Right cardiac atrium (tissue), 5 donors: ENCODE measurements at regions of chr17 and their contacts with region 1.

Region 1: DNA sequence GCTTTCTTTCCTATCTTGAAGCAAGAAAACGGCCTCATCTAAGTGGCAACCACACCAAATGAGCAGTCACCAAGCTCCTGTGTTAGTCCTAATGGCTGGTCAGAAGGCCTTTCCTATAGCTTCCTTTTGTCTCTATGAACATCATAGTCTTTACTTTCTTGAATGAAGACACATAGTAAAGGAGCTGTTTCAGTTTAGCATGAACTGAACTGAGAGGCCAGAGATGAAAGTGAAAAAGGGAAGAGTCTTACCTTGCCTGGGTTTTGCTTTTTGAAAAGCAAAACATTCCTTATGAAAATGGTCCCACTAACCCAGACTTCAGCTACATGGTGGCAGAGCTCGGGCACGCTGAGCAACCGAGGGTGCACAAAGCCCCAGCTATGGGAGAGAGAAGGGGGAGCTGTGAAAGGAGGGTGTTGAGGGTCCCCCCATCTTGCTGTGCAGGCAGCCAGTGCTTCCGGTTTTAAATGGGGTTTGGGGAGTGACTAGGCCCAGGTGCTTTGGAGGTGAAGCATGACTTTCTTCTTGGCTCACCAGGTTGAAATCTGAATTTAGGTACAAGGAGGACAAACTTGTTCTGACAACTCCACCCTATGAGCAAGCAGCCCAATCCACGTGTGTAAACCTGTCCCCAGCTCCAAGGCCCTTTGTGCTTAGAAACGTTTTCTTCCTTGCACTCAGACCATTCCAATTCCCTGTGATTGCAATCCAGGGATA is 9.1 kb upstream of the PSMC3IP start:
- DNase-seq: no peak
- ATAC-seq: no peak
- H3K4me3 ChIP-seq: no peak overlapping the region
- H3K27ac ChIP-seq: no peak overlapping the region
- H3K4me1 ChIP-seq: no peaks in the 10 kb centered on the region
- H3K27me3 ChIP-seq: no peaks in the 10 kb centered on the region

Region 2: GRCh38 chr17:42704837-42705494 is 118.3 kb after region 1 on chr17:
- intact Hi-C with region 1: loop called in 1 of 4 experiments (anchors 5 kb)
- DNase-seq: no peak
- ATAC-seq: no peak
- H3K4me3 ChIP-seq: no peak overlapping the region
- H3K27ac ChIP-seq: no peak overlapping the region
- H3K4me1 ChIP-seq: no peaks in the 10 kb centered on the region
- H3K27me3 ChIP-seq: no peaks in the 10 kb centered on the region

Region 3: GRCh38 chr17:42760652-42761581 is 174.2 kb after region 1 on chr17 and contains the start of gene RAMP2:
- intact Hi-C with region 1: loop called in 1 of 4 experiments (anchors 10 kb)
- DNase-seq: peak; percentile 50 to 83 (median 82)
- ATAC-seq: peak; percentile 62 to 69
- H3K4me3 ChIP-seq: peak within 1 kb of the TSS; percentile 58
- H3K27ac ChIP-seq: peak within 1 kb of the TSS; percentile 31
- H3K4me1 ChIP-seq: peaks cover 2% of the 10 kb centered on the region
- H3K27me3 ChIP-seq: no peaks in the 10 kb centered on the region
- total RNA-seq, gene RAMP2: 29.2 to 45.9 (median 40.9) TPM